ENCODE measurements at regions of chr12 and their contacts with region 1.

Region 1: GRCh38 chr12:106386813-106387535 is 29.4 kb downstream of the POLR3B start:
- DNase-seq: no peak
- H3K4me3 ChIP-seq: no peak overlapping the region
- H3K27ac ChIP-seq: no peak overlapping the region
- H3K4me1 ChIP-seq: no peaks in the 10 kb centered on the region
- H3K27me3 ChIP-seq: no peaks in the 10 kb centered on the region
- CTCF ChIP-seq: no peak

Region 2: DNA sequence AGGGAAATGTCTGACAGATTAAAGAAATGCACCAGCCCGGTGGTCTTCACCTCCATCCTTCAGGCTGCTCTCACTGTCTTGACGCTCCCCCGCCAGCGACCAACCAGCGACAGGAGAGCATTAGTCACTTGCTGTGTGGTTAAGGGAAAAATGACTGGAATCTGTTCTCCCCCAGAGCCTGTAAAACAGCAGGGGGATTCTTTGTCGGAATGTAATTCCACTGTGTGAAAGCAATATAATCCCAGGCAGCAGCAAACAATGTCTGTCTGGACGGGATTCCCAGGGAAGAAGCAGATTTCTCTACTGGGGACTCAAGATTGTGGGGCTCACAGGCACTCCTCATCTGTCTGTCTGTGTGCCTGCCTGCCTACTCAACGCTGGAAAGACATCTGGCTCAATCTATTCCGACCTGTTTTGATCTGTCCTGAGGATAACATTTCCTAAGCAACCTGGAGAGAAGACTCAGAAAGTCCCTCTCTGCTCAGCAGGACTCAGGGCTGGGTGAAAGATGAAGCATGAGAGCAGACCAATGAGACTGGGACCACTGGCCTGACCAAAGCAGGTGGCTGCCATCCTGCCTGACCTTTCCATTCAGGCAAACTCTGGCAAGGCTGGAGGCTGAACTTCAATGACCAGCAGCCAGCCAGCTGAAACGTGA is 302.8 kb before region 1 on chr12:
- intact Hi-C with region 1: no loop called
- DNase-seq: no peak
- H3K4me3 ChIP-seq: no peak overlapping the region
- H3K27ac ChIP-seq: peak overlapping the region; percentile 78 to 86
- H3K4me1 ChIP-seq: peaks cover 4 to 90% (median 75%) of the 10 kb centered on the region in 4 donors
- H3K27me3 ChIP-seq: no peaks in the 10 kb centered on the region
- CTCF ChIP-seq: no peak

Region 3: GRCh38 chr12:106247674-106248311 is 139.2 kb before region 1 on chr12 and contains the start of gene CKAP4:
- intact Hi-C with region 1: no loop called
- DNase-seq: peak; percentile 71 to 92
- H3K4me3 ChIP-seq: peak within 1 kb of the TSS; percentile 94 to 96
- H3K27ac ChIP-seq: peak within 1 kb of the TSS; percentile 100
- H3K4me1 ChIP-seq: peaks cover 0 to 42% (median 28%) of the 10 kb centered on the region in 4 donors
- H3K27me3 ChIP-seq: no peaks in the 10 kb centered on the region
- CTCF ChIP-seq: peak in 1 of 2 experiments; percentile 11

Region 4: GRCh38 chr12:106814714-106815113 is 427.7 kb after region 1 on chr12:
- intact Hi-C with region 1: no loop called
- DNase-seq: no peak
- H3K4me3 ChIP-seq: no peak overlapping the region
- H3K27ac ChIP-seq: no peak overlapping the region
- H3K4me1 ChIP-seq: no peaks in the 10 kb centered on the region
- H3K27me3 ChIP-seq: no peaks in the 10 kb centered on the region
- CTCF ChIP-seq: no peak

Region 5: DNA sequence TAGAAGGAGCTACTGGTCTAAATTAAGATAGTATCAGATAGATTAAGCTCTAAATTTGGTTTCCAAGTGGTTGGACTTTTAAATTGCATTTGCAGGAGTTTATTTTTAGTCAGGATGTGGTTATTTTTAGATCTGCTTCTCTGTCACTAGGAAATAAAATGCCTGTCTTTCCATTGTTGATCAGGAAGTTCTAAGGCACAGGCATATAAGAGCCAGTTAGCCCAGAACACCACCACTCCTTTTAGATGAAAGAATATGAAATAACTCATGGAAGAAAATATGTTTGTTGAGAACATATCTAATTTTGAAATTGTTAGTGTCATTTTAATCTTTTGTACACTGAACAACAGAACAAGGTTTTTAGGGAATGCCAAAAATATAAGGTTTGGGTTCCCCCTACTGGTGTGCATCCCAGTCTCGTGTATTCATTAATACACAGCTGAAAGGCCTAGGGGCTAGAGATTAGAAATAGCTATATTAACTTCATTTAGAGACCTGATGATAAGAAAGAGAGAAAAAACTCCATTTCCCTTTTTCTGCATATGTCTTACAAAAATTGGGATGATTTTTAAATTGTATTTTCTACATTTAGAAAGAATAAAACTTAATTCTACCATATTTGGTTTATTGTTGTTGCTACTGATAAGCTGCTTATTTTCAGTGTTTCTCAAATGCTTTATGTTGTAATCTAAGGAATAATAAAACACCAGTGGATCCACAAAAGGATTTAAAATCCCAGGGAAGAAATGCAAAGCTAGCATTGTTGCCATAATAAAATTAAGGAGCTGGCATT is 454.7 kb after region 1 on chr12:
- intact Hi-C with region 1: loop called (anchors 2 kb)
- DNase-seq: peak in 1 of 2 donors; percentile 29
- H3K4me3 ChIP-seq: no peak overlapping the region
- H3K27ac ChIP-seq: peak overlapping the region in 1 of 2 donors; percentile 36
- H3K4me1 ChIP-seq: peaks cover 0 to 32% (median 9%) of the 10 kb centered on the region in 4 donors
- H3K27me3 ChIP-seq: no peaks in the 10 kb centered on the region
- CTCF ChIP-seq: peak; percentile 53 to 67

Region 6: GRCh38 chr12:106919910-106920544 is 533.1 kb after region 1 on chr12:
- intact Hi-C with region 1: loop called (anchors 5 kb)
- DNase-seq: no peak
- H3K4me3 ChIP-seq: no peak overlapping the region
- H3K27ac ChIP-seq: no peak overlapping the region
- H3K4me1 ChIP-seq: no peaks in the 10 kb centered on the region
- H3K27me3 ChIP-seq: peaks cover 0 to 5% of the 10 kb centered on the region in 2 donors
- CTCF ChIP-seq: peak; percentile 76 to 85